ENCODE measurements at regions of chr1 and their contacts with region 1.

Region 1: DNA sequence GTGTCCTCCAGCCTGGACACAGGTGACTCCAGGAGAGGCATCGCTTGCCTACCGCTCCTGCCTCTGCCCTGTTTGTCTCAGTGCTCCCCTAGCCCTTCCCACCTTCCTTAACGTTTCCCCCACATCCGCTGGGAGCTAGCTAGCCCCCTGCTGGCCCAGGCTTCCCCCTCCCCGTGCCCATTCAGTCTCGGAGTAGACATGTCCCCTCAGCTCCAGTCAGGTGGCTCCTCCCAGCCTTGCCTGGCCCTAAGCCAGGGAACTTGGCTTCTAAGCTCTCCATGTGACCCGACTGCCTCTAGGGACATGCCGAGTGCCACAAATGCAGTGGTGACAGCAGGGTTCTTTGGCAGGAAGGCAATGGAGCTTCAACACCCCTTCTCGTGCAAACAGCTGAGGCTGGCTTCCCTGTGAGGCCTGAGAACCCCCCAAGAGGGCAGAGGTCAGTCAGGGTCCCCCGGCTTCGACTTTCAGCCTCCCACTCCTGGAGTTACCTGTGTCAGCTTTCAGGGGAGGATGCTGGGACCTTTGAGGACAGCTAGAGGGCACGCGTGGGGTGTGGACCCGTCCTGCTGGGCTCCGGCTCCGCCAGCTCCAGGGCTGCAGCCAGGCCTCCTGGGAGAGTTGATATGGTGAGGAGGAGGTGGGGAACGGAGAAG is 16.2 kb downstream of the DRAXIN start:
- DNase-seq: no peak
- ATAC-seq: peak; percentile 19
- H3K4me3 Mint-ChIP-seq: no peak overlapping the region
- H3K27ac Mint-ChIP-seq: peak overlapping the region; percentile 25; the same call in 1 of the 2 replicates
- H3K4me1 Mint-ChIP-seq: peaks cover 48% of the 10 kb centered on the region
- H3K27me3 Mint-ChIP-seq: no peaks in the 10 kb centered on the region
- CTCF ChIP-seq: no peak

Region 2: GRCh38 chr1:11629184-11630016 is 78.3 kb before region 1 on chr1:
- CTCF ChIA-PET with region 1: no interaction called
- POLR2A ChIA-PET with region 1: no interaction called
- DNase-seq: no peak
- ATAC-seq: no peak
- H3K4me3 Mint-ChIP-seq: no peak overlapping the region
- H3K27ac Mint-ChIP-seq: no peak overlapping the region
- H3K4me1 Mint-ChIP-seq: no peaks in the 10 kb centered on the region
- H3K27me3 Mint-ChIP-seq: no peaks in the 10 kb centered on the region
- CTCF ChIP-seq: no peak

Region 3: GRCh38 chr1:11654137-11654938 is 53.4 kb before region 1 on chr1 and contains the starts of genes FBXO2 and FBXO44:
- CTCF ChIA-PET with region 1: interaction called, 16 read pairs
- POLR2A ChIA-PET with region 1: no interaction called
- DNase-seq: peak; percentile 88
- ATAC-seq: peak; percentile 69
- H3K4me3 Mint-ChIP-seq: peak within 1 kb of the TSS; percentile 74
- H3K27ac Mint-ChIP-seq: no peak within 1 kb of the TSS
- H3K4me1 Mint-ChIP-seq: peaks cover 33% of the 10 kb centered on the region
- H3K27me3 Mint-ChIP-seq: peaks cover 22% of the 10 kb centered on the region
- CTCF ChIP-seq: no peak
- total RNA-seq, gene FBXO2: 58.2 to 68.2 TPM (median 63.7 TPM) in 3 replicates
- total RNA-seq, gene FBXO44: 34.9 to 45.6 TPM (median 40.6 TPM) in 3 replicates

Region 4: DNA sequence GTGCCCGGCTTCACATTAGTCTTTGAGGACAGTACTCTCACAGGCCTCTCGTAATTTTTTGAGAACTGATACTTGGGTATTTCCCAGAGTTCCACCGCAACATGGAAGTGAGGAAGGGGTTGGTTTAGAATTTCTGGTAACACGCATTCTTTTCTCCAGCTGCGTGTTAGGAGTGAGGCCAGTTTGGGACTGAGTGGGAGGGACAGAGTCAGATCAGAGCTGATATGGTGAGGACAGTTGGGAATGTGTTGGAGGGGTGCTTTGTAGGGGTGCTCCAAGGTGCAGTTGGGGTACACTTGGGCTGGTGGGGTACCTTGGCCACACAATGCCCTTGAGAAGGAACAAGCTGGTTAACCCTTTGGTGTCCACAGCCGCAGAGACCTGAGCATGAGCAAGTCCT is 37.0 kb before region 1 on chr1:
- CTCF ChIA-PET with region 1: interaction called, 31 read pairs
- POLR2A ChIA-PET with region 1: no interaction called
- DNase-seq: no peak
- ATAC-seq: no peak
- H3K4me3 Mint-ChIP-seq: no peak overlapping the region
- H3K27ac Mint-ChIP-seq: no peak overlapping the region
- H3K4me1 Mint-ChIP-seq: no peaks in the 10 kb centered on the region
- H3K27me3 Mint-ChIP-seq: no peaks in the 10 kb centered on the region; the same call in 1 of the 2 replicates
- CTCF ChIP-seq: no peak

Region 5: DNA sequence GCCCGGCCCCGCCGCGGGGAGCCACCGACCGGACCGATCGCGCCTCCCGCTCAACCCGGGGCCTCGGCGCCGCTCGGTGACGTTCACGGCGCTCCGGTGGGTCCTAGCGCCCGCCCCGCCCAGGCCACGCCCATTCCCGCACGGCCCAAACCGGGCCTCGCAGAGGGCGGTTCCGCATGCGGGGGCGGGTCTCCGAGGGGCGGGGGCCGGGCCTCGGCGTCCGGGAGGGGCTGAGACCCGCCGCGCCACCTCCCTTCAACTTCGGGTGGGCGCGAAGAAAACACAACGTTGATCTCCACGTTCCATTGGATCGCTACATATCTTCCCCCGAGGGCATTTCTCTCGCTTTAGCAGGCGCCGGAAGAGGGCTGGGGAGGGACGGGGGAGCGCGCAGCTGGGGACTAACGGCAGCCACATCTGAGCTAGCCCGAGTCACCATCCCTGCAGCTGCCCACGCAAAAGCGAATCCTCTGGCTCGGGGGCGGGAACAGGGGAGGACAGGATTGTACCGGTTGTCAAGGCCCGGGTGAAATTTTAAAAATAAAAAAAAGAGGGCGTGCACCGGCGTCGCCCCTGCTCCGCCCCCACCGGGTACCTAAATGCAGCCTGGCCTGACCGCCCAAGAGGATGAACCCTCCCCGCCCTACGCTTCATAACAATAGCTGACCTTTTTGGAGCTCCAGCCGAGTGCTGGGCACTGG is 26.5 kb before region 1 on chr1 and contains the start of gene MAD2L2:
- CTCF ChIA-PET with region 1: interaction called, 39 read pairs
- POLR2A ChIA-PET with region 1: interaction called, 6 read pairs
- DNase-seq: peak; percentile 86
- ATAC-seq: peak; percentile 54
- H3K4me3 Mint-ChIP-seq: peak within 1 kb of the TSS; percentile 83
- H3K27ac Mint-ChIP-seq: peak within 1 kb of the TSS; percentile 100
- H3K4me1 Mint-ChIP-seq: peaks cover 61% of the 10 kb centered on the region
- H3K27me3 Mint-ChIP-seq: no peaks in the 10 kb centered on the region
- CTCF ChIP-seq: no peak
- total RNA-seq, gene MAD2L2: 283 to 312 TPM (median 305 TPM) in 3 replicates

Region 6: DNA sequence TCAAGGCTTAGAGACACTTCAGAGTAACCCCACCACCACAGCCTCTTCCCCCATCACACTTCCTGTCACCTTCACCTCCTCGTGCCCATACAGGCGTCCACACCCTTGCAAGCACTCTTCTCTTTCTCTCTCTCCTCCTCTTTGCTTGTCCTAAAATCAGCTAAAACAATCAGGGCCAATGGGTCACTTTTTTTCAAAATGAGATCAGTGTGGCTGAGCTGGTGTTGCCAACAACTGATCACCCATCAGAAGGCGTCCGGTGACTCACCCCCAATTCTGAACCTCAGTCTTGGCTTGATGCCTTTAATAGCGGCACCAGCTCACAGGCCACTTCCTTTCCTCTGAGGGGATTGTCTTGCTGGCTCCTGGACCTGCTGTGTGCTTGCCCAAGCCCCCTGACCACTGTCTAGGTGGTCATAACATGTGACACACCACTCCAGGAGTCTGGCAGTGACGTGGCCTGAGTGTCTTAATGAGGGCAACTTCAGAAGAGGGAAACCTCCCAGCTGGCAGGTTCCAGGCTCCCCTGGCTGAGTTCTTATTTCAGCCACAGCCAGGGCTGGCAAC is 14.6 kb before region 1 on chr1:
- CTCF ChIA-PET with region 1: interaction called, 21 read pairs
- POLR2A ChIA-PET with region 1: interaction called, 6 read pairs
- DNase-seq: no peak
- ATAC-seq: no peak
- H3K4me3 Mint-ChIP-seq: peak overlapping the region; percentile 89
- H3K27ac Mint-ChIP-seq: 0 out of 2 replicates have a peak overlapping the region, but pooled peaks have one; percentile 0
- H3K4me1 Mint-ChIP-seq: peaks cover 55% of the 10 kb centered on the region
- H3K27me3 Mint-ChIP-seq: no peaks in the 10 kb centered on the region
- CTCF ChIP-seq: no peak

Region 7: DNA sequence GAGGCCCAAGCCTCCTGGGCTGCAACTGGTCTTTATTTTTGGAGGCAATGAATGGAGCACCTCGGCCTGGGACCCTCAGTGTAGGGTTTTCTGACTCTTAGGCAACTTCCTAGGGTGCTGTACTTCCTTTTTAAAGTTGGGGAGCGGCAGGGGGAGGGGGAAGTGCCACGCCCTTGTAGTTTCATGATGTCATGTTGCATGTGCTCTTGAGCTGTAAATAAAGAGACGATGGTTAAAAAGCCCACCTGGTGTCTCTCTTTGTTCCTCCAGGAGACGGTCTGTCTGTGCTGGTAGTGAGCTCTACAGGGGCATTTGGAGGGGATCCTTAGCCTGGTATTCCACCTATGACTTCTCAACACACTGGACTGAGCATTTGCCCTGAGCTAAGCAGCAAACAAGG is 17.9 kb after region 1 on chr1:
- CTCF ChIA-PET with region 1: interaction called, 55 read pairs
- POLR2A ChIA-PET with region 1: no interaction called
- DNase-seq: no peak
- ATAC-seq: peak; percentile 37
- H3K4me3 Mint-ChIP-seq: no peak overlapping the region
- H3K27ac Mint-ChIP-seq: peak overlapping the region; percentile 29
- H3K4me1 Mint-ChIP-seq: peaks cover 37% of the 10 kb centered on the region
- H3K27me3 Mint-ChIP-seq: no peaks in the 10 kb centered on the region
- CTCF ChIP-seq: no peak

Region 8: GRCh38 chr1:11735854-11736745 is 28.4 kb after region 1 on chr1 and contains the start of gene AGTRAP:
- CTCF ChIA-PET with region 1: interaction called, 15 read pairs
- POLR2A ChIA-PET with region 1: no interaction called
- DNase-seq: peak; percentile 98
- ATAC-seq: peak; percentile 73
- H3K4me3 Mint-ChIP-seq: peak within 1 kb of the TSS; percentile 94
- H3K27ac Mint-ChIP-seq: peak within 1 kb of the TSS; percentile 93
- H3K4me1 Mint-ChIP-seq: peaks cover 47% of the 10 kb centered on the region
- H3K27me3 Mint-ChIP-seq: no peaks in the 10 kb centered on the region; the same call in 1 of the 2 replicates
- CTCF ChIP-seq: no peak
- total RNA-seq, gene AGTRAP: 81.6 to 102 TPM (median 101 TPM) in 3 replicates